Activated CD4-positive, alpha-beta memory T cell treated with anti-CD3 and anti-CD28 coated beads, Interleukin-2, amount 10 ng/mL, durations not matched to agents 7 days and 5 days (primary cell): ENCODE measurements at regions of chr1 and their contacts with region 1.

Region 1: GRCh38 chr1:155323798-155324610 is 3.3 kb downstream of the RUSC1 start:
- DNase-seq: peak; percentile 92
- H3K4me3 Mint-ChIP-seq: peak overlapping the region; percentile 85
- H3K27ac Mint-ChIP-seq: peak overlapping the region; percentile 78
- H3K4me1 Mint-ChIP-seq: peaks cover 46% of the 10 kb centered on the region
- H3K27me3 Mint-ChIP-seq: no peaks in the 10 kb centered on the region

Region 2: DNA sequence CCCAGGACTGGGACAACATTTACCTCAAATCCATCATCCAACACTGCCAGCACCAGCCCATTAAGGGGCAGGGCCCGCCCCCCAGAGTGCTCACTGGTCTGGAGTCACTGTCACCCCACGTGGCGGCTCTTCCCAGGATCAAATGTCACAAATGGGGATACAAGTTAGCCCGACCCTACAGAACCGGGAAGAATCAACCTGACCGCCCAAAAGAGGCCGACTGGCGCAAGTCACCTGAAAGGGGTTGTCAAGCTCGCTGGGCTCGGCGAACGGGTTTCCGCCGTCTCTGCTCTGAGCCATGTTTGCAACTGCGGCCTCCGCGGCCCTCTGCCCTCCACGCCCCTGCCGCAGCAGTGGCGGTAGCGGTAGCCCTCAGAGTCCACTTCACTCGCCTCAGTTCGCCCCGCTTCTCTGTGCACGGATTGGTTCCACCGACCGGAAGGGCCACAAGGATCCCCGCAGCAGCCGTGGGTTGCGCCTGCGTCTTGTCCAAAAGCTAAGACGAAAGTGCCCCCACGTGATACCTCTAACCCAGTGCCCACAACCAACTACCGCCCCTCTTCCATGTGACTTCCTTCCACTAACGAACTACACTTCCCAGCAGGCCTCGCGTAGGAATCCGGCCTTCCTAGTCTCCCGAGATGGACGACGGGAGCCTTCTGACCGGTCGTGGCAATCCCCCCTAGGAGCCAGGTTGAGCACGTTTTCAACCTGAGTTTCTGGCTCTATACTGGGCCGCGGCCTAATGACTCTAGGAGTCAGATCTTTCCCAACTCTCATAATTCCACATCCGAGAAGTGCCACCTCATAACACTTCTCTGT is 61.9 kb before region 1 on chr1 and contains the start of gene SCAMP3:
- CTCF ChIA-PET with region 1: interaction called, 9 read pairs
- POLR2A ChIA-PET with region 1: interaction called, 20 read pairs
- DNase-seq: peak; percentile 90
- H3K4me3 Mint-ChIP-seq: peak within 1 kb of the TSS; percentile 98
- H3K27ac Mint-ChIP-seq: peak within 1 kb of the TSS; percentile 91
- H3K4me1 Mint-ChIP-seq: peaks cover 44% of the 10 kb centered on the region
- H3K27me3 Mint-ChIP-seq: no peaks in the 10 kb centered on the region
- total RNA-seq, gene SCAMP3: 87.5 to 91.9 TPM

Region 3: DNA sequence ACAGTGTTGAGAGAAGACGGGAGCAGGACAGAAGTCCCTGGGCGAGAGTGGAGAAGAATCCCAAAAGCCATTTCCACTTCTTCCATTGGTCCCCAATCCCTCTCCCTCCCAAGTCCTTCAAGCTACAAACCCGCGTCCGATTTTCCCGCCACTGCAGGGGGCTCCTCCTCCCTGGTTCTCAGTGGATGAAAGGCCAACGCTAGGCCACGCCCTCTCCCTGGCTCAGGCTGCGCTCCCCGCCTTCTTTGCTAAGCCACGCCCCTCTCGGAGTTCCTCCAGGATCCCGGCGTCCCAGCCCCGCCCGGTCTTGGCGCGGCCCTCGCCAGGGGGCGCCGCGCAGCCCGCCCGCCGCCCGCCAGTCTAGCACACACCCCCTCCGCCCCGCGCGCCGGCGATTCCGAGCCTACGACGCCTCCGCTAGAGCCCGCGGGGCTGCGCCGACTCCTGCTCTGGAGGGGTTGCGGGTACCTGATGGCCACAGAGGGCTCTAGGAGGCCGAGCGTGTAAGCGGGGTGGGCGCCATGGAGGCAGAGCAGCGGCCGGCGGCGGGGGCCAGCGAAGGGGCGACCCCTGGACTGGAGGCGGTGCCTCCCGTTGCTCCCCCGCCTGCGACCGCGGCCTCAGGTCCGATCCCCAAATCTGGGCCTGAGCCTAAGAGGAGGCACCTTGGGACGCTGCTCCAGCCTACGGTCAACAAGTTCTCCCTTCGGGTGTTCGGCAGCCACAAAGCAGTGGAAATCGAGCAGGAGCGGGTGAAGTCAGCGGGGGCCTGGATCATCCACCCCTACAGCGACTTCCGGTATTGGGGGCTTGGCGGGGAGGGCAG is 46.7 kb before region 1 on chr1 and contains the start of gene HCN3:
- CTCF ChIA-PET with region 1: interaction called, 16 read pairs
- POLR2A ChIA-PET with region 1: interaction called, 24 read pairs
- DNase-seq: peak; percentile 93
- H3K4me3 Mint-ChIP-seq: peak within 1 kb of the TSS; percentile 56
- H3K27ac Mint-ChIP-seq: no peak within 1 kb of the TSS
- H3K4me1 Mint-ChIP-seq: peaks cover 31% of the 10 kb centered on the region
- H3K27me3 Mint-ChIP-seq: peaks cover 4% of the 10 kb centered on the region
- total RNA-seq, gene HCN3: 3.7 to 4.9 TPM